ENCODE measurements at regions of chr12 and their contacts with region 1.

Region 1: DNA sequence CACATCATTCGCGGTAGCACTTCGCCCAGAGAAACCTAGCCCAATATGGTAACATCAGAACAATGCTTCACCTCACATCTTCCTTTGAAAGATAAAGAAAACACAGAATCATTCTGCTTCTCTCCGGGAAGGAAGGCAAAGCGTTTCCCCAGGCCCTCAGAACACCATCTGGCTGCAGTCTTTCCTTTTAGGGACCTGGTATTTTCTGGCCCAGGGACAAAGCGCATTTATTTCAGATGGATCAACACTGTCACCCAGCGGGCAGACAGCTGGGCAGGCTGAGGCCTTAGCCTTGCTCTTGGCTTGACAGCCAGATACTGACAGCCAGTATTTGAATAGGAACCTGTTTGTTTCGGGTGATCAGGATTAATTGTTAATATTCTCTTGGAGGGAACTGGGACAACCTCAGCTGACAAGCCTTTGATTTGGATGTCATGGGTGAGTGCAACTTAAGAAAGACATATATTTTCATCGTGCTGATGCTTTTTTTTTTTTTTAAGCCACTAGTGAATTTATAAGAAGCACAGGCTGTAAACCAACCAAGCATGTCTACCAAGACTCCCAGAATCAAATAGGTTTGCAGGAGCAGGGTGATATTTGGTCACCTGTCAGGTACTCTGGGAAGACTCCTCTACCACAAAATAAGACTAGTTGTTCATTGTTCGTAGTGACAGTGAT is 118.9 kb downstream of the VEZT start:
- DNase-seq: peak; percentile 67
- ATAC-seq: peak; percentile 94
- H3K4me3 ChIP-seq: peak overlapping the region; percentile 6
- H3K27ac ChIP-seq: peak overlapping the region; percentile 3
- H3K4me1 ChIP-seq: no peaks in the 10 kb centered on the region
- H3K27me3 ChIP-seq: no peaks in the 10 kb centered on the region
- CTCF ChIP-seq: peak; percentile 84

Region 2: GRCh38 chr12:95117178-95117599 is 219.3 kb before region 1 on chr12:
- intact Hi-C with region 1: loop called (anchors 10 kb)
- DNase-seq: no peak
- ATAC-seq: peak; percentile 91
- H3K4me3 ChIP-seq: no peak overlapping the region
- H3K27ac ChIP-seq: no peak overlapping the region
- H3K4me1 ChIP-seq: peaks cover 21% of the 10 kb centered on the region
- H3K27me3 ChIP-seq: no peaks in the 10 kb centered on the region
- CTCF ChIP-seq: peak; percentile 76

Region 3: DNA sequence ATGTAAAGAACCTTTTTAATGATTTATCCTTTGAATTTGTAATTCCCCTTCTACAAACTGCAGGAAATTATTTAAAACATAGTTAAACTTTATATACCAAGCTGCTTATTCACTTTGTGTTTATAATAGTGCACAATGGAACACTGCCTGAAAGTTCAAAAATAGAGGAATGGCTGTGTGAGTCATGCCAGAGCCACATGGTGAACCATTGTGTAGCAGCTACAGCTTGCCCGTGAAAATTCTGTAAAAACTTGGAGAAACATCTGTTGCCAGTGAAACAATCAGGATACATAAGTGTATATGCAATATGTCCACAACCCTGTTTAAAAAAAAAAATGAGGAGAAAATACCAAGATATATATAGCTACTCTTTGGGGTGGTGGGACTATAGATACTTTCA is 59.4 kb before region 1 on chr12:
- intact Hi-C with region 1: no loop called
- DNase-seq: no peak
- ATAC-seq: no peak
- H3K4me3 ChIP-seq: no peak overlapping the region
- H3K27ac ChIP-seq: no peak overlapping the region
- H3K4me1 ChIP-seq: no peaks in the 10 kb centered on the region
- H3K27me3 ChIP-seq: no peaks in the 10 kb centered on the region
- CTCF ChIP-seq: no peak